ENCODE measurements at regions of chr1 and their contacts with region 1.

Region 1: DNA sequence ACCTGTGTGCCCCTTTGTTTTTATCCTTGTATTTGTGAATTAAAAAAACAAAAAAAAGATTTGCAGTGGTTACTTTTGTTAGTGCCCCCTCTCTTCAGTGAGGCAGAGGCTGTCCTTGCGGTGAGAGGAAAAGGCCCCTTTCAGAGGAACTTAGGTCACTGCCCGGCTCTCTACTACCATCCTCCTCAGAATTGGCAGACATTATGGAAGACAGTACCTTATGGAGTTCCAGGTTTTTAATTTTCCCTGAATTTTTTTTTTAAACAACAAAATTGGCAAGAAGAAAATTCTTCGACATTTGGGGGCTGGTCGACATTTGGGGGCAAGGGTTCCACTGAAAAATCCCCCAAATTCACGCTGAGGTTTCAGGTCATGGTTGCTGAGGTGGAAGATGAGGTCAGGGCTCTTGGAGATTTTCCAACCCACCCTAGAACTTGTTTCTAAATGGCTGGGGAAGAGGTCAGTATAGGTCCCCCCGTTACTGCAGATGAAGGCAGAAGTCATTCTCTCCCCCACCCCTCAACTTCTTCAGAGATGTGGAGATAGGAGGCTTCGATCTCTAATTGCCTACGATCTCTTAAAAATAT is 5.3 kb downstream of the RXFP4 start:
- DNase-seq: no peak
- CTCF ChIP-seq: no peak

Region 2: DNA sequence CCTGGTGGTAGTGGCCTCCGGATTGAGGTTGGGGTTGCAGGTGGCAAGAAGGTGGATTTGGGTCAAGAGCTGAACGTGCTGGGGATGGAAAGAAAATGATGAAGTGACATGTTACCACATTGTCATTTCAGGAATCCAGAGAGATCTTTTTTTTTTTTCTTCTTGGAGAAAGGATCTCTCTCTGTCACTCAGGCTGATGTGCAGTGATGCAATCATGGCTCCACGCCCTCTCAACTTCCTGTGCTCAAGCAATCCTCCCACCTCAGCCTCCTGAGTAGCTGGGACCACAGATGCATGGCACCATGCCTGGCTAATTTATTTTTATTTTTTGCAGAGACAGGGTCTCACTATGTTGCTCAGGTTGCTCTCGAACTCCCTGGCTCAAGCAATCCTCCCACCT is 170.3 kb before region 1 on chr1:
- CTCF ChIA-PET with region 1: no interaction called
- POLR2A ChIA-PET with region 1: no interaction called
- DNase-seq: no peak
- CTCF ChIP-seq: no peak

Region 3: DNA sequence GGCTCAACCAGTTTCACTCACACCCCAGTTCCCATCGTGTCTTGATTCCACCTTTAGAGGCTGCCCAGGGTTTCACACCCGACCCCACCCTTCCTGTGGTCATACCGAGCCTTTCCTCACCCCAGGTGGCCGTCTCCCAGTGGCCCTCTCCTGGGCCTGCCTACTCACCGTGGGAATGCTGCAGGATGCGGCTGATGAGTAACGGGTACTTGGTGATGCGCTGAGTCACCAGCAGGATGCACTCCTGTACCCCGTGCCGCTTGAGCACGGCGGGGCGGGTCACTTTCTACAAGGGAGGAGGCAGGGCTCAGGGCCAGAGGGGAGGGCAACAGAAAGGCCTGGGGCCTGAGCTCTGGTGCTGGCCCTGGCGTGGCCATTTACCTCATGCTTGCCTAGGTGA is 15.2 kb after region 1 on chr1:
- CTCF ChIA-PET with region 1: interaction called, 15 read pairs
- POLR2A ChIA-PET with region 1: interaction called, 4 read pairs
- DNase-seq: no peak
- CTCF ChIP-seq: peak; percentile 28

Measured in GM10248 (cell line).